ENCODE measurements at regions of chr22 and their contacts with region 1.

Region 1: DNA sequence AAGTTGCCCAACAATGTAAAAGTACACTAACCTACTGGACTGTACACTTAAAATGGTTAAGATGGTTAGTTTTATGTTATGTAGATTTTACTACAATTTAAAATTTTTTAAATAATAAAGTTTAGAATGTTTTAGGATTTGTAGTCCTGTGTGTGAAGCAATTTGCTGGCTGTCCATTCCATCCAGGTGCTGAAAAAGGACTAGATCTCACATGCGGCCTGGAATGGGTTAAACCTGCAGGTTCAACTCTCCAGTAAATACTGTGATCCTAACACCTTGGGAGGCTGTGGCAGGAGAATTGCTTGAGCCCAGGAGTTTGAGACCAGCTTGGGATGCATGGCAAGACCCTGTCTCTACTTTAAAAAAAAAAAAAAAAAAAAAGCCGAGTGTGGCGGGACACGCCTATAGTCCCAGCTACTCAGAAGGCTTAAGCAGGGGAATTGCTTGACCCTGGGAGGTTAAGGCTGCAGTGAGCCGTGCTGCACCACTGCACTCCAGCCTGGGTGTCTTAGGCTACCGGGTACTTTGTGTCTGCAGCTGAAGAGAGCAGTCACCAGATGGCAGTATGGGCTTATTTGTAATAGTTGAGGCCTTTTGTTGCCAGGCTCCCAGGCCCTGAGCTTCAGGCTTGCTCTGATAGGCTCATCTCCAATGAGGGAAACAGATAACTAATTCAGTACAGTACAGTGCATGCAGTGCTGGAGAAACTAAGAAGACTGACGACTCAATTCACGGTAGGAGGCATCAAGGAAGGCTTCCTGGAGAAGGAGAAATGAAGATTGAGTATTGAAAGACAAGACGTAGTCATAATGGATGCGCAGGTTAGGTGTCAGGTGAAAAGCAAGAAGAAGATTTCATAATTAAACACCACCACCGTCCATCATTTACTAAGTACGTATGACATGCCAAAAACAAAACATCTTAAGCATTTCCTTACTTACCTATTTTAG is 64.7 kb upstream of the ASPHD2 start:
- DNase-seq: peak; percentile 77 to 88 (median 88)
- H3K4me3 ChIP-seq: no peak overlapping the region
- H3K27ac ChIP-seq: no peak overlapping the region
- H3K4me1 ChIP-seq: peaks cover 0 to 8% (median 0%) of the 10 kb centered on the region in 4 experiments
- H3K27me3 ChIP-seq: peaks cover 0 to 6% (median 0%) of the 10 kb centered on the region in 5 experiments

Region 2: DNA sequence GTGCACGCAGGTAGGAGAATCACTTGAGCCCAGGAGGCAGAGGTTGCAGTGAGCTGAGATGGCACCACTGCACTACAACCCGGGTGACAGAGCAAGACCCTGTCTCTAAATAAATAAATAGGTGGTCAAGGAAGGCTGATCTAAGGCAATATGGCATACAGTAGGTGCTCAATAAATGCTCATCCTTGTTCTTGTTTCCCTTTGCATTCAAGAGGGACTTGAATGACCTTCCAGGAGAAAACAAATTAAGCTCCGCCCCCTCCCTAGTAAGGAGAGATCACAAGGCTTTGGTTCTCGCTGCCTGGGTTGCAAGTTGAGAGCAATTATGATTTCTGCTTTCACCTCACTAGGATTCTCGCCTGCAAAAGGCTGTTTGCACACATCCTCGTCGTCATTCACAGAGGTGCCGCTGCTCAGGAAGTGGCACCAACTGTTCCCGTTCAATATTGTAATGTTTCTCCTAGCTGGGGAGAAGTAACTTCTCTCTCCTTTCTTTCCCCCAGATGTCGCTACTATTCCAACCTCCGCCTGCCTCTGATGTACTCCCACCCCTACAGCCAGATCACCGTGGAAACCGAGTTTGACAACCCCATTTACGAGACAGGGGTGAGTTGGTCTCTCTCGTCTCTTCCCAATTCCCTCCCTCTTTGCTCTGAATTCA is 13.0 kb after region 1 on chr22:
- CTCF ChIA-PET with region 1: interaction called, 18 read pairs
- POLR2A ChIA-PET with region 1: no interaction called
- DNase-seq: peak; percentile 58 to 77 (median 70)
- H3K4me3 ChIP-seq: peak overlapping the region in 4 of 7 experiments; percentile 0 to 57 (median 22)
- H3K27ac ChIP-seq: no peak overlapping the region
- H3K4me1 ChIP-seq: peaks cover 0 to 11% (median 6%) of the 10 kb centered on the region in 4 experiments
- H3K27me3 ChIP-seq: peaks cover 0 to 2% (median 0%) of the 10 kb centered on the region in 5 experiments

Region 3: DNA sequence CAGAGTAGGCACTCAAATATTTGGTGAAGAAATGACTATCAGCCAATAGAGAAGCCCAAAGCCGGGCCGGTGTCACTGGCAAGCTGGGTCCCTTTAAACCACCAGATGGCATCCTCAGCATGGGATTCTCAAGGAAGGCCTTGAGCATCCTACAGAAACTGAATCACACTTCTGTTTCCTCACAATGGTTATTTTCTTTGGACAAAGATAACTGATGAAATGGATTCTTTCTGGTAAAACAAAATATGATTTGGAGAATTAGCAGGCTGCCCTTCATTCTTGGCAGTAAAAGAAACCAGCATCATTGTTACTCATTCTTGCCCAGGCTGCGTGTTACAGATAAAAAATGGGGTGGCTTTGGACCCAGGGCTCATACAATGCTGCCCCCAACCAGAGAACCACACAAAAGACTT is 34.4 kb after region 1 on chr22:
- CTCF ChIA-PET with region 1: interaction called, 28 read pairs
- POLR2A ChIA-PET with region 1: no interaction called
- DNase-seq: peak; percentile 56 to 84 (median 83)
- H3K4me3 ChIP-seq: no peak overlapping the region
- H3K27ac ChIP-seq: no peak overlapping the region
- H3K4me1 ChIP-seq: no peaks in the 10 kb centered on the region
- H3K27me3 ChIP-seq: no peaks in the 10 kb centered on the region

Measured in common myeloid progenitor, CD34-positive (primary cell).